PC-3 (cell line): ENCODE measurements at regions of chr3 and their contacts with region 1.

Region 1: GRCh38 chr3:191136347-191136746 is 62.7 kb upstream of the OSTN start:
- DNase-seq: peak; percentile 68
- ATAC-seq: peak; percentile 73
- H3K4me3 ChIP-seq: no peak overlapping the region
- H3K27ac ChIP-seq: no peak overlapping the region
- H3K4me1 ChIP-seq: peaks cover 3% of the 10 kb centered on the region
- H3K27me3 ChIP-seq: no peaks in the 10 kb centered on the region
- CTCF ChIP-seq: peak; percentile 80

Region 2: GRCh38 chr3:190701096-190701532 is 435.2 kb before region 1 on chr3:
- CTCF ChIA-PET with region 1: no interaction called
- POLR2A ChIA-PET with region 1: no interaction called
- intact Hi-C with region 1: no loop called
- DNase-seq: peak; percentile 87
- ATAC-seq: peak; percentile 93
- H3K4me3 ChIP-seq: no peak overlapping the region
- H3K27ac ChIP-seq: no peak overlapping the region
- H3K4me1 ChIP-seq: peaks cover 19% of the 10 kb centered on the region
- H3K27me3 ChIP-seq: no peaks in the 10 kb centered on the region
- CTCF ChIP-seq: peak; percentile 95

Region 3: DNA sequence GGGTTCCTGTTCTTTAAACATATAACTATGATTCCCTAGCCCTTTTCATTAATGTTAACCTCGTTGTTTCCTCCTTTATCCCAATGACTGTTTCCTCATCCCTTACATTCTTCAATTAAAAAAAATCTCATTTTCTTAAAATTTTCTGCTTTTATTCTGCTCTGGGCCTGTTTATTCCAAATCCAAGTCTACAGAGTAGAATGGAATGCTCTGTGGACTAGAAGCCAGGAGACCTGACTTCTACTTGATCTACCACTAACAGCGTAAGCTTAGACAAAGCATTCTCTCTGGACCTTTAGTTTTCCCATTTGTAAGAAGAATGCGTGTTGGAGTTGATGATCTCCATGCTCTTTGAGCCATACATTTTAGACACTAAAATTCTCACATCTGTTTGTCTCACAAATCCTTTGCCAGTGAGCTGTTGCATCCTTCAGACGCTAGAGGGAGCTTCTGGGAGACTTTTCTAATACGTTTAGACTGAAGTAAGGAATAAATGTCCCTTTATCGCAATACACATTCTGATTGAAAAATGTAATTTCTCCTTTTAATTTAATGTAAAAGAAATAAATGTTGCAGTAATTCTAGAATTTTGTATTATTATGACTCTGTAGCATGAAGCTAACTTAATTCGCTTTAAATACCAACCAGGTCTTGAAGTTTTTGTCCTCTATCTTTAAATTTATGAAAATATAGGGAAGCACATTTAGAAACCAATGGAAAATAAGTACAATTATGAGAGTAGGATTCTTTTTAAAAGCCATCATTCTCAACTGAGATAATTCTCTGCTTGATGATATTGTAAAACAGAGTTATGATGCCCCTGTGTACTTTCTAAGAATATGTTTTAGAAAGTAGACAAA is 252.1 kb before region 1 on chr3:
- CTCF ChIA-PET with region 1: no interaction called
- POLR2A ChIA-PET with region 1: no interaction called
- intact Hi-C with region 1: loop called (anchors 5 kb)
- DNase-seq: peak; percentile 88
- ATAC-seq: peak; percentile 89
- H3K4me3 ChIP-seq: peak overlapping the region; percentile 35; the same call in 1 of the 2 replicates
- H3K27ac ChIP-seq: no peak overlapping the region
- H3K4me1 ChIP-seq: no peaks in the 10 kb centered on the region
- H3K27me3 ChIP-seq: no peaks in the 10 kb centered on the region
- CTCF ChIP-seq: peak; percentile 96

Region 4: GRCh38 chr3:191066669-191067068 is 69.7 kb before region 1 on chr3:
- CTCF ChIA-PET with region 1: no interaction called
- POLR2A ChIA-PET with region 1: no interaction called
- intact Hi-C with region 1: loop called (anchors 5 kb)
- DNase-seq: peak; percentile 92
- ATAC-seq: peak; percentile 67
- H3K4me3 ChIP-seq: peak overlapping the region; percentile 25; the same call in 1 of the 2 replicates
- H3K27ac ChIP-seq: peak overlapping the region; percentile 95
- H3K4me1 ChIP-seq: peaks cover 69% of the 10 kb centered on the region
- H3K27me3 ChIP-seq: no peaks in the 10 kb centered on the region
- CTCF ChIP-seq: no peak

Region 5: DNA sequence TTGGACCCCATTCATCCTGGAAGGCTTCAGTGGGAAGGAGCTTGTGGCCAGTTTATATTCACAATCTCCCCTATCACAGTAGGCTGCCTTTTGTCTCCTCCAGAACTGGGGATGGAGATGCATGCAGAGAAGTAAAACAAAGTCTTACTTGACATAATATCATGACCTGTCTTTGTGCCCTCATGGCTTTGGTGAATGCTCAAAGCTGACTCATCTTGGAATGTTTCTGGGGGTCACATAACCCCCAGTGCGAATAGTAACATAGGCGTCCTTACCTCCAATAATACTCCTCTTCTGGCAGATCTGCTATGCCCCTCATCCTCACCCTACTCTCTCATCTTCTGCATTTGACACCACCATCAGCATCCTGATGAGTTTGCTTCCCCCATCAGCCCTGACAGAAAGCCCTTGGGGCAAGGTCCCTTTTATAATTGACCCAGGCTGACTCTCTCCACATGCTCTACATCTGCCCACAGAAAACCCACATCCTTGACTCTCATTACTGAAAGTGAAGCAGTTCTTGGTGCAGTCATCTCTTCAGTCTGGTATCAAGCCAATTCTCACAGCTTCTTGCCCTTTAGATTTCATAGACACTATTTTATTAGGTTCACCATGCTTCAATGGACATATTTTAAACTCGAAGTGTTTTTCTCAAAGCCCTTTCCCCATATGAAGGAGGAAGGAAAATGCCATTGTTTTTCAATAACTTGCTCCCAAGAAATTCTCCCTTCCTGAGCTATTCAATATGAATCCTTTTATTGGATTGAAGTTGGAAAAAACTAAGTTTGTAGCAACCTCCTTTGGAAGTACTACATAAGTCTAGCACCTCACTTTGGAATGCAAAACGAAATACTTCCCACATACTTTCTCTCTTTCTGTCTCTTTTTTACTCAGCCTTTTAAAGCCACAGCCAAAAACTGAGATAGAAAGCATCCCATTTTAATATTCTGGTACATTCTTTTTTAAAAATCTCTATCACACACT is 99.3 kb after region 1 on chr3:
- CTCF ChIA-PET with region 1: interaction called, 3 read pairs
- POLR2A ChIA-PET with region 1: no interaction called
- intact Hi-C with region 1: loop called (anchors 2 kb)
- DNase-seq: peak; percentile 57
- ATAC-seq: no peak
- H3K4me3 ChIP-seq: no peak overlapping the region
- H3K27ac ChIP-seq: peak overlapping the region; percentile 94
- H3K4me1 ChIP-seq: peaks cover 57% of the 10 kb centered on the region
- H3K27me3 ChIP-seq: no peaks in the 10 kb centered on the region
- CTCF ChIP-seq: no peak

Region 6: DNA sequence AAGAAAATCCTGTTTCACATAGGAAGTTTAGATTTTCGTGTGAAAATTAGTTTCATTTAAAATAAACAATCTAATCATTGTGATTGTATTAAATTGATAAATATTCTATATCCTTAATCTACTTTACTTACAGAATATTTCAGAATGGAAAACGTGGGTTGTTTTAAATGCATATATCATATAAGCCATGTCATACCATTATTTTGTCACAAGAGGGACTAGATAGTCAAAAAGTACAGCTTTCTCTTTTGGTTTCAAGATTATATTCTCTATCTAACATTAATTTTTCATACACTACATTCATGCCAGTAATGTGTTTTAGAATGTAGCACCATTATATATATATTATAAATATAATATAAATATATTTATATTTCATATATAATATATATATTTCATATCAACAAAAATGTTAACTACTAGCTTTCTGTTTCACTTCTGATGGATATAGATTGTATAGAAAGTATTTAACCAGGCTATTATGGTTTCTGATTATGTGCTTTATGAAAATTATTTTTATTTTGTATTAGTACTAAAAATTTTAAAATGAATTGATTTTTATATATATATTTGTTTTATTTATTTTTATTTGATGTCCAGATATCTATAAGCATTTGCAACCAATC is 108.0 kb after region 1 on chr3:
- CTCF ChIA-PET with region 1: interaction called, 3 read pairs
- POLR2A ChIA-PET with region 1: no interaction called
- intact Hi-C with region 1: loop called (anchors 2 kb)
- DNase-seq: peak; percentile 56
- ATAC-seq: peak; percentile 19; the same call in 1 of the 2 replicates
- H3K4me3 ChIP-seq: no peak overlapping the region
- H3K27ac ChIP-seq: no peak overlapping the region
- H3K4me1 ChIP-seq: peaks cover 44% of the 10 kb centered on the region
- H3K27me3 ChIP-seq: no peaks in the 10 kb centered on the region
- CTCF ChIP-seq: peak; percentile 65

Region 7: GRCh38 chr3:191376516-191377141 is 240.3 kb after region 1 on chr3:
- CTCF ChIA-PET with region 1: no interaction called
- POLR2A ChIA-PET with region 1: no interaction called
- intact Hi-C with region 1: loop called (anchors 2 kb)
- DNase-seq: peak; percentile 91
- ATAC-seq: peak; percentile 93
- H3K4me3 ChIP-seq: peak overlapping the region; percentile 11; the same call in 1 of the 2 replicates
- H3K27ac ChIP-seq: peak overlapping the region; percentile 79
- H3K4me1 ChIP-seq: peaks cover 44% of the 10 kb centered on the region
- H3K27me3 ChIP-seq: no peaks in the 10 kb centered on the region
- CTCF ChIP-seq: no peak

Region 8: GRCh38 chr3:191549357-191549756 is 413.0 kb after region 1 on chr3:
- CTCF ChIA-PET with region 1: no interaction called
- POLR2A ChIA-PET with region 1: no interaction called
- intact Hi-C with region 1: no loop called
- DNase-seq: no peak
- ATAC-seq: no peak
- H3K4me3 ChIP-seq: no peak overlapping the region
- H3K27ac ChIP-seq: no peak overlapping the region
- H3K4me1 ChIP-seq: no peaks in the 10 kb centered on the region
- H3K27me3 ChIP-seq: 0 out of 2 replicates have a peak, but pooled peaks cover 4% of the 10 kb centered on the region
- CTCF ChIP-seq: no peak